Natural killer cell (primary cell): ENCODE measurements at regions of chr9 and their contacts with region 1.

Region 1: GRCh38 chr9:37262410-37262809 is 142.0 kb downstream of the ZCCHC7 start:
- DNase-seq: peak in 1 of 2 donors; percentile 5
- ATAC-seq: no peak
- H3K4me3 ChIP-seq: no peak overlapping the region
- H3K4me3 Mint-ChIP-seq: no peak overlapping the region
- H3K27ac ChIP-seq: no peak overlapping the region
- H3K27ac Mint-ChIP-seq: no peak overlapping the region
- H3K4me1 ChIP-seq: no peaks in the 10 kb centered on the region
- H3K4me1 Mint-ChIP-seq: peaks cover 14 to 18% of the 10 kb centered on the region in 2 donors
- H3K27me3 ChIP-seq: no peaks in the 10 kb centered on the region
- H3K27me3 Mint-ChIP-seq: no peaks in the 10 kb centered on the region
- CTCF ChIP-seq: no peak

Region 2: DNA sequence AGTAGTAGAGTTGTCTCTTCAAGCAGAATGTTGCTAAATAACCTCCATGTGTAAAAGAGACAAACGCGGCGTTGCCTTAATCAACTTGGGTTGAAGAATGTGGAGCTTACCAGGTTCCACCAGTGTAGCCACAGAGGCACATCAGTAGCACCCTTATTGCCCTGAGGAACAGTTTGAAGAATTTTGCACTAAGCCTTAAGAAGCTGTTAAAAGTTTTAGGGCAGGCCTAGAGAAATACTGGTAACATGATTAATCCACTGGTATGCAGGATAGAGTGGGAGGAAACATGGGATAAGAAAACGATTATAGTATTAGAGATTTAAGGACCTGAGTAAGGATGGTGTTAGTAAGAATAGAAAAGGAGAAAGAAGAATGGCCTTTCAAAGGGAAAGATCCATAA is 41.4 kb before region 1 on chr9:
- intact Hi-C with region 1: loop called (anchors 5 kb)
- DNase-seq: no peak
- ATAC-seq: no peak
- H3K4me3 ChIP-seq: no peak overlapping the region
- H3K4me3 Mint-ChIP-seq: no peak overlapping the region
- H3K27ac ChIP-seq: no peak overlapping the region
- H3K27ac Mint-ChIP-seq: peak overlapping the region in 1 of 2 donors; percentile 14
- H3K4me1 ChIP-seq: no peaks in the 10 kb centered on the region
- H3K4me1 Mint-ChIP-seq: peaks cover 0 to 26% of the 10 kb centered on the region in 2 donors
- H3K27me3 ChIP-seq: no peaks in the 10 kb centered on the region
- H3K27me3 Mint-ChIP-seq: no peaks in the 10 kb centered on the region
- CTCF ChIP-seq: no peak

Region 3: DNA sequence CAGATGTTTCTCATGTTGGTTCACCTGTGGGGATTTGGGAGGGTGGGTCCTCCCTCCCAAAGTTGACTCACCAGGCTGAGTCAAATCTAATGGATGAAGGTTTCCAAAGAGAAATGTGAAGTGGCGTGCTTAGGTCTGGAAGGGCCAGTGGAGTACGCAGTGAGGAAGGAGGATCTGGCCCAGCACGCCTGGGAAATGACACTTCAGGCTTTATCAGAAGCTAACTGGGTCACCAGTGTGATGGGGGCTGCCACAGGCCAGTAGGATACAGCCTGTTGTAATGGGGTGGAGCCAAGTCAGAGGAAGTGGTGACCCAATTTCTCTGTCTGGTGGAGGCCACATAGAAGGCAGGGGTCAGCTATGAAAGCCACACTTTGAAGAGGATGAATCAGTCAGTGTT is 241.3 kb after region 1 on chr9:
- intact Hi-C with region 1: no loop called
- DNase-seq: peak; percentile 69 to 72
- ATAC-seq: peak; percentile 98 to 99 (median 98)
- H3K4me3 ChIP-seq: peak overlapping the region; percentile 16
- H3K4me3 Mint-ChIP-seq: peak overlapping the region; percentile 90
- H3K27ac ChIP-seq: peak overlapping the region; percentile 80
- H3K27ac Mint-ChIP-seq: peak overlapping the region; percentile 90 to 97
- H3K4me1 ChIP-seq: peaks cover 34% of the 10 kb centered on the region
- H3K4me1 Mint-ChIP-seq: peaks cover 63 to 66% of the 10 kb centered on the region in 2 donors
- H3K27me3 ChIP-seq: no peaks in the 10 kb centered on the region
- H3K27me3 Mint-ChIP-seq: no peaks in the 10 kb centered on the region
- CTCF ChIP-seq: no peak